ENCODE measurements at regions of chr1 and their contacts with region 1.

Region 1: DNA sequence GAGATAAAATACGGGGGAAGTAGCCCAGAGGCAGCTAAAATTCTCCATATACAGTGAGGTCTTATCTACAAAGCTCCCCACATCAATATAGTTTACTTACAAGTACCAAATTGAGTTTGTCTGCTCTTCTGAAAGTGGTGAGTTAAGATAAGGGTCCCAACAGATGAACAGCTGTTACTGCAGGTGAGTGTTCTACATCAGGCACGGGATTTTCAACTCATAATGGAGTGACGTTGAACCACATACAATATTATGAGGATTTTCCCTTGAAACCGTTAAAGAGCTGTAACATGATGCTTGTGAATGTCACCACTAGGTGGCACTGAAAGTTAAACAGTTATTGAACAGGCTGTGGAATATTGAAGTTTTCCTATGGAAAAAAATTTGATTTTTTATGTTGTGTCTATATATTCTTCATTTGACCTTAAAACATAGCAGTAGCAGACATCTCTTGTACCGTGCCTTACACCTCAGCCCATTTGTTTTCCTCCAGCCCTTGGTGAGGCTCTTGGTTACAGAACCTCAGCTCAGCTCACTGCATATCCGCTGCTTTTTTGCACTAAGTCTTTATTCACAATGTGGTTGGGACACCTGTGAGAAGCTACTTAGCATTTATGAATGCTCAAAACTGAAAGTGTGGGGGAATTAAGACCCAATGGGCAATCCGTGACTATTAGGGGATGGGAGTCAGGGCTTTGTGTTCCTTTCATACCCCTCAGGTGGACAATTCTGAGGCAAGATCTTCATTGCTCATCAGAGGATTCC is 23.2 kb downstream of the CD1D start:
- DNase-seq: peak in 1 of 3 donors; percentile 69
- ATAC-seq: peak; percentile 69
- H3K4me3 ChIP-seq: no peak overlapping the region
- H3K4me1 ChIP-seq: no peaks in the 10 kb centered on the region
- CTCF ChIP-seq: peak; percentile 72

Region 2: DNA sequence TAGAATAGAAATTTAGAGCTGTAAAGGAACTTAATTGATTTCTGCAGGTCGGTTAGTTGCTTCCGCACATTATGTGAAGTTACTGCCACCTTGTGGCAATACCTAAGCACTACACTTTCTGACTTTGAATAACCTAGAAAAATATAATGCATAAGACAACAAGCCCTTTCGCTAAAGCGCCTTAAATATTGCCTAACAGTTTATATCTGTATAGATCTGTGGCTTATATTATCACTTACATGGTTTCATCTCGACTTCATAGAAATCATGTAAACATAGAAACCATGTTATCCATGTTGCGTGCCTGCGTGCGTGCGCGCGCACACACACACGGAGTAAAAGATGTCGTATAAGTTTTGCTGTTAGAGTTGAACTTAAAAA is 794.9 kb after region 1 on chr1:
- intact Hi-C with region 1: loop called in 1 of 2 experiments (anchors 10 kb)
- DNase-seq: peak in 2 of 3 donors; percentile 43 to 72
- ATAC-seq: peak; percentile 80
- H3K4me3 ChIP-seq: no peak overlapping the region
- H3K4me1 ChIP-seq: no peaks in the 10 kb centered on the region
- CTCF ChIP-seq: peak; percentile 67

Region 3: DNA sequence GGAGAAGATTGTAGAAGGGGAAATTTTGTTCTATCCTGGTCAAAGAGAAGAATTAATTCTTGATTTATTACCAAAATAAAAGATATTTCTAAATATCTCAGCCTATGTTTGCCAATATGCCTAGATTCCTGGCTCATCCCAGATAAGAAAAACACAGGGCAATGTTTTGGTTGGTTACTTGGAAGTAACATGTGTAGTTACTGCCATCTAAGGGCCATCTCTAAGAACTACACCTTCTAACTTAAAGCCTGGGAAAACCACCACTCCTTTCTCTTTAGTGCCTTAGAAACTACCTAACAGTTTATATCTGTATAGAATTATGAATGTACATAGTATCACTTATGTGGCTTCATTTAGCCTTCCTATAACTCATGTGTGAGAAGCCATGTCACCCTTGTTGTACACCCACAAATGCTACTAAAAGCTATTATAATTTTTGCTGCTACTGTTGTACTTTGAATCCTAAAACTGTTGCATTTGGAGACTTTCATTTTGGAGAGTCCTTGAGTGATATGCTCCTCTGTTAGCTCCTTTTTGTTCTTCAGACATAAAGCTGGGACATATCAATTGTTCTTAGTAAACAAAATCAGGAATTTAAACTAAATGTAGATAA is 868.2 kb after region 1 on chr1:
- intact Hi-C with region 1: loop called (anchors 5 kb)
- DNase-seq: peak in 1 of 3 donors; percentile 27
- ATAC-seq: peak; percentile 63
- H3K4me3 ChIP-seq: no peak overlapping the region
- H3K4me1 ChIP-seq: no peaks in the 10 kb centered on the region
- CTCF ChIP-seq: peak; percentile 50